ENCODE measurements at regions of chr12 and their contacts with region 1.

Region 1: DNA sequence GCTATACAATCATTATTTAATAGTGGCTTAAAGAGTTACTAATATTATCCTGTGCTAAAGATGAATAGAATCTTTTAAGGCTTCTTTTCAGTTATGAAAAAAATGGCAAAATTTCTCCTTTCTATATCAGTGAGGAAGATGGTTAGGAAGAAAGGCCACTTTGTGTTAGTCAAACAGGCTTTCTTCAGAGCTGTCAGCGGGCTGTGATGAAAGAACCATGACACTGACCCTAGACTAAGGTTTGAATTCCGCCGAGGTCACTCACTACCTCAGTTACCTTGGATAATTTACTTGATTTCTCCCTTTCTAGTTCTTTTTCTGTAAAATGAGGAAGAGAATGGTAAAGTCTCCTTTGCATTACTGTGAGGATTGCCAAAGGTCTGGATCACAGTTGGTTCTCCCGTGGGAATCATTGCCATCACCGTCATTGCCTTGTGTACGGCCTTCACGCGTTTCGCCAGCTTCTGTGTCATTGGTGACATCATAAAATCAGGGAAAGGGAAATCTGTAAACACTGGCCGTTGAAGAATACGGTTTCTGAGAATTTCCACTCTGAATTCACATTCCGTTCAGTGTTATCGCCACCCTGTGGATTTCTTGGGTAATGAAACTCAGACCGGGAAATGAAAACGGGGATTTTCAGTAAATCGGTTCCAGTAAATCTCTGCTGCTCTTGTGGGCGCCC is 26.7 kb upstream of the YBX3 start:
- DNase-seq: peak; percentile 94
- ATAC-seq: peak; percentile 96
- H3K4me3 ChIP-seq: peak overlapping the region; percentile 8 to 36; a peak in 2 of 4 replicates
- H3K27ac ChIP-seq: no peak overlapping the region
- H3K4me1 ChIP-seq: peaks cover 0 to 9% of the 10 kb centered on the region in 2 experiments; a peak in 2 of 4 replicates
- H3K27me3 ChIP-seq: no peaks in the 10 kb centered on the region
- CTCF ChIP-seq: peak; percentile 83 to 98 (median 94)
- POLR2A ChIP-seq: no peak
- RAD21 ChIP-seq: peak; percentile 95

Region 2: DNA sequence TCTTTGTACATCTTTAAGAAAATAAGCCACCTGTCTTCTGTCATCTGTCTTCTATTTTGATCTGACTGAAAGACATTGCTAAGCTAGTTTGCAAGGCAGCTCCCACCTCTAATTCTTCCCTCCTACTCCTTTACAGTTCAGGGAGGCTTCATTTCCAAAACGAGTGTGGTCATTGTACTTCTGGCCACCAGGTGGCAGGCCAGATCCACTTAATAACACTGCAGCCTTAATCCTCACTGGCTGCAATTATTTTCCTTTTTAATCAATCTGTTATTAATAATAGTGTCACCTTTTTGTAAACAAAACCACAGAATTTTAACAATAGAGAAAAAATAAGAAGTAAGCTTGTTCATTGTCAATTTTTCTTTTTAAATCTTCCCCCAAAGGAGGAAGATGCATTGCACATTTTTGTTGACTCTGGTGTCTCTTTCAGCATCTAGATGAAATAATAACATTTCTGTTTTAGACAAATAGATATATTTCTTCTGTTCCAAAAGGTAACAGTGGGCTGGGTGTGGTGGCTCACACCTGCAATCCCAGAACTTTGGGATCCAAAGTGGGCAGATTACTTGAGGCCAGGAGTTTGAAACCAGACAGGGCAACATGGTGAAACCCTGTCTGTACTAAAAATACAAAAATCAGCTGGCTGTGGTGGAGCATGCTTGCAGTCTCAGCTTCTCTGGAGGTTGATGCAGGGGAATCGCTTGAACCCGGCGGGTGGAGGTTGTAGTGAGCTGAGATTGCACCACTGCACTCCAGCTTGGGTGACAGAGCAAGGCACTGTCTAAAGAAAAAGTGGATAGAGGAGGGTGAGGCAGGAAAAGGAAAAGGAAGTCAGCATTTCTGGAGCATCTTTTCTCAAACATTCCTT is 513.8 kb before region 1 on chr12:
- CTCF ChIA-PET with region 1: no interaction called
- POLR2A ChIA-PET with region 1: no interaction called
- RAD21 ChIA-PET with region 1: interaction called in 1 of 2 experiments, 3 read pairs
- intact Hi-C with region 1: loop called (anchors 2 kb)
- DNase-seq: peak; percentile 31
- ATAC-seq: peak; percentile 85
- H3K4me3 ChIP-seq: no peak overlapping the region
- H3K27ac ChIP-seq: no peak overlapping the region
- H3K4me1 ChIP-seq: no peaks in the 10 kb centered on the region
- H3K27me3 ChIP-seq: no peaks in the 10 kb centered on the region
- CTCF ChIP-seq: peak; percentile 73 to 79 (median 75)
- POLR2A ChIP-seq: no peak
- RAD21 ChIP-seq: peak; percentile 87

Region 3: GRCh38 chr12:10364815-10365622 is 384.8 kb before region 1 on chr12:
- CTCF ChIA-PET with region 1: interaction called, 15 read pairs
- POLR2A ChIA-PET with region 1: no interaction called
- RAD21 ChIA-PET with region 1: no interaction called
- intact Hi-C with region 1: no loop called
- DNase-seq: peak; percentile 71
- ATAC-seq: peak; percentile 56
- H3K4me3 ChIP-seq: peak overlapping the region; percentile 71 to 74
- H3K27ac ChIP-seq: peak overlapping the region; percentile 89
- H3K4me1 ChIP-seq: peaks cover 37 to 52% of the 10 kb centered on the region in 2 experiments; a peak in 3 of 4 replicates
- H3K27me3 ChIP-seq: no peaks in the 10 kb centered on the region
- CTCF ChIP-seq: no peak
- POLR2A ChIP-seq: no peak
- RAD21 ChIP-seq: no peak

Region 4: DNA sequence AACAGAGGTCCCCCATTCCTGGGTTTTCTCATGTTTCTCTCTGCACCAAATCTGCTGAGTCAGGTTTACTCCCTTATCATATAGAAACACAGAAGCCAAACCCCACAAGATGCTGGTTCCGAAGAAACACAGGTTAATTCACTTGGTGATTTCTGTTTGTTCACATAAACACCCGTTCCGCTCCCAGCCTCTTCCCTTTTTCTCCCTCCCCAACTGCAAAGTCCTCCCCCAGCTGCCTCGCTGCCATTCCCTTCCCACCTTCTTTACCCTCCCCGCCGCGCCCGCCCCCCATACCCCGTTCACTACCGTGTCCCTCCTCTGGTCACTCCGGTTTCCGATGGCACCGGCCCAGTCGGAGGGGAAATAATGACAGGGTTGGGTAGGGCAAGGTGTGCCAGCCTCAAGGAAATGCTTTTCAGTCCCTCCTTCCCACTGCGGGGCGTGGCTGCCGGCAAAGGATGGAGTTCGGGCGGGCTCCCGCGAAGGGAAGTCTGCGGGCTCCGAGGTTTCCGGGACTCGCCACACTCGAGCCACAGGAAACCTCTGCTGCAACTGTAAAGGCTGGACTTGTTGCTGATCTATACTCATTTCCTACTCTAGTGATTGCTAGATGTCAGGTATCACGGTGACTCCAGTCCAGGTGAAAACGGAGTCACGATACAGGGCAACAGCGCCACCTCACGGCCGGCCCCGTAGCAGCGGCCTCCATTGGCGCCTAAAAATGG is 76.0 kb before region 1 on chr12 and contains the start of gene STYK1:
- CTCF ChIA-PET with region 1: interaction called, 4 read pairs
- POLR2A ChIA-PET with region 1: no interaction called
- RAD21 ChIA-PET with region 1: no interaction called
- intact Hi-C with region 1: loop called (anchors 2 kb)
- DNase-seq: peak; percentile 81
- ATAC-seq: peak; percentile 92
- H3K4me3 ChIP-seq: peak within 1 kb of the TSS; percentile 50 to 77
- H3K27ac ChIP-seq: peak within 1 kb of the TSS; percentile 67
- H3K4me1 ChIP-seq: peaks cover 0 to 18% of the 10 kb centered on the region in 2 experiments; a peak in 3 of 4 replicates
- H3K27me3 ChIP-seq: no peaks in the 10 kb centered on the region
- CTCF ChIP-seq: peak; percentile 88 to 98 (median 93)
- POLR2A ChIP-seq: no peak
- RAD21 ChIP-seq: peak; percentile 89
- total RNA-seq, gene STYK1: 4.4 TPM

Region 5: GRCh38 chr12:10722905-10723866 is 26.7 kb before region 1 on chr12 and contains the start of gene YBX3:
- CTCF ChIA-PET with region 1: interaction called, 12 read pairs
- POLR2A ChIA-PET with region 1: interaction called, 3 read pairs
- RAD21 ChIA-PET with region 1: no interaction called
- intact Hi-C with region 1: loop called (anchors 1 kb)
- DNase-seq: peak; percentile 66
- ATAC-seq: peak; percentile 78
- H3K4me3 ChIP-seq: peak within 1 kb of the TSS; percentile 90 to 93
- H3K27ac ChIP-seq: peak within 1 kb of the TSS; percentile 96
- H3K4me1 ChIP-seq: peaks cover 32 to 49% of the 10 kb centered on the region in 2 experiments
- H3K27me3 ChIP-seq: no peaks in the 10 kb centered on the region
- CTCF ChIP-seq: no peak
- POLR2A ChIP-seq: peak; percentile 61
- RAD21 ChIP-seq: no peak
- total RNA-seq, gene YBX3: 419 TPM

Region 6: GRCh38 chr12:10794222-10794621 is 44.4 kb after region 1 on chr12:
- CTCF ChIA-PET with region 1: no interaction called
- POLR2A ChIA-PET with region 1: no interaction called
- RAD21 ChIA-PET with region 1: no interaction called
- intact Hi-C with region 1: no loop called
- DNase-seq: no peak
- ATAC-seq: no peak
- H3K4me3 ChIP-seq: no peak overlapping the region
- H3K27ac ChIP-seq: no peak overlapping the region
- H3K4me1 ChIP-seq: no peaks in the 10 kb centered on the region
- H3K27me3 ChIP-seq: no peaks in the 10 kb centered on the region
- CTCF ChIP-seq: no peak
- POLR2A ChIP-seq: no peak
- RAD21 ChIP-seq: no peak

Measured in HCT116 (cell line).